Aorta (tissue), 5 donors: ENCODE measurements at regions of chr13 and their contacts with region 1.

Region 1: DNA sequence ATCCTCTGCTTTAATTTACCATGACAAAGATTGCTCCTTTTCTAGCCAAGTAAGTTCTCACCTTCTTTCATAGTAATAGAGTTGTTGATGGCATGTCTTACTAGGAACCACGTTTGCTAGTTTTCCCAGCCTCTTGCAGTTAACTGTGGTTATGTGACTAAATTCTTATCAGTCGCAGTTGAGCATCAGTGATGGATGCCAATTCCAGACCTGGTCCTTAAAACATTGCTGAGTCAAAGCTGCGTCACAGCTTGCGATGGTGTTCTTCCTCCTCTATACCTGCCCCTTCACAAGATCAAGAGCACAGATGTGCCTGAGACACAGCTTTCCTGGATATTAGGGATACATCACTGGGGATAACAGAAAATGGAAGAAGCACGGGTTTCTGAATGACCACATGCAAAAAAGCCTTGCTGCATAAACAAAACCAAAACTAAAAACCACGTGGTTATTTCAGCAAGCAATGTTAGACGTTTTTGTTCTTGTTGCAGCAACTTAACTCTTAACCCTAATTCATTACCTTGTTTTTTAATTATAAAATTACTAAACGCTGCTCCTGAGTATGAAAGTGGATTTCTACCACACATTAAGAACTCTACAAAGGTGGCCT is 97.6 kb upstream of the DACH1 start:
- DNase-seq: no peak
- ATAC-seq: no peak
- H3K4me3 ChIP-seq: no peak overlapping the region
- H3K27ac ChIP-seq: no peak overlapping the region
- H3K4me1 ChIP-seq: no peaks in the 10 kb centered on the region
- H3K27me3 ChIP-seq: no peaks in the 10 kb centered on the region

Region 2: GRCh38 chr13:70769817-70770216 is 1194.8 kb before region 1 on chr13:
- intact Hi-C with region 1: loop called in 1 of 2 experiments (anchors 10 kb)
- DNase-seq: no peak
- ATAC-seq: no peak
- H3K4me3 ChIP-seq: no peak overlapping the region
- H3K27ac ChIP-seq: no peak overlapping the region
- H3K4me1 ChIP-seq: no peaks in the 10 kb centered on the region
- H3K27me3 ChIP-seq: no peaks in the 10 kb centered on the region

Region 3: DNA sequence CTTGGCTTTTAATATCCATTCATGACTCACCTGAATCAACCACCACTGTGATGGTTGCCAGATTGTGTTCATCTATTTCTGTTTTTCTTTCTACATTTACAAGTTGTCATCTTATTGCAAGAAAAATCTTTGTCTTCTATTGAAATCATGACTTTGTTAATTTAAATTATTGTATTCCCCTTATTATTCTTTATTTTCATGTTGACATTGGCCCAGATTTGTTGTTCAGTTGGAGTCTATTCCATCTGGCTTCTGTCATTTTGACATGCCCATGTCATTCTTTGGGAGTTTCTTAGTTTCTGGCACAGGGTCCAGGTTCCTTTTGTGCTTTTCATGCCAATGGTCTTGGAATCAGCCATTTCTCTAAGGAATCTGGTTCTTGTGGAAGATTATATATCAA is 77.7 kb before region 1 on chr13:
- intact Hi-C with region 1: no loop called
- DNase-seq: no peak
- ATAC-seq: no peak
- H3K4me3 ChIP-seq: no peak overlapping the region
- H3K27ac ChIP-seq: no peak overlapping the region
- H3K4me1 ChIP-seq: no peaks in the 10 kb centered on the region
- H3K27me3 ChIP-seq: peaks cover 0 to 2% of the 10 kb centered on the region in 2 donors

Region 4: GRCh38 chr13:72004784-72005374 is 40.3 kb after region 1 on chr13:
- intact Hi-C with region 1: no loop called
- DNase-seq: no peak
- ATAC-seq: no peak
- H3K4me3 ChIP-seq: no peak overlapping the region
- H3K27ac ChIP-seq: no peak overlapping the region
- H3K4me1 ChIP-seq: no peaks in the 10 kb centered on the region
- H3K27me3 ChIP-seq: no peaks in the 10 kb centered on the region